SK-MEL-5 (cell line): ENCODE measurements at regions of chr16 and their contacts with region 1.

Region 1: DNA sequence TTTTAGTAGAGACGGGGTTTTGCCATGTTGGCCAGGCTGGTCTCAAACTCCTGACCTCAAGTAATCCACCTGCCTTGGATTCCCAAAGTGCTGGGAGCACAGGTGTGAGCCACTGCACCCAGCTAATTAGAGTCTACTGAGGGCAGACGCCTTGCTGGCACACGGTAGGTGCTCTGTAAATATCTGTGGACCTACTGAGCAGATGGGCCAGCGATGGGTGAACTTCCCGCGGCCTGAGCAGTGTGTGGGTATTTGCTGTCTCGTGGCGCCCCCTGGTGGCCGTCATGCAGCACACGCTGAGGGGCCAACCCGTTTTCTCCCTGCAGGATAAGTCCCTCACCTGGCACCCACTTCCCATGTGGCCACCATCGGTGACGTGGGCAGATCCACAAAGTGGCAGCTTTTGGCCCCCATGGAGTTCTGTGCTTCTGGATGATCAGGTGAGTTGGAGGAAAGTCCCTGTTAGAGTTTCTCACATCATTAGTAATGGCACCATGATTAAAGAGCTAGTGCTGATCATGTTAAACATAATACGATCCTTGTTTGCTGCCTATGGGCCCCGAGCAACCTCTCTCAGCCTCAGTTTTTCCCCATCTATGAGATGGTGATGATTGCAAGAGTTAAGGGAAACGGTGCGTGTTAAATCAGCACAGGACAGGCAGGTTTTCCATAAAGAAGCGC is 40.7 kb downstream of the ZDHHC7 start:
- DNase-seq: peak; percentile 66

Region 2: GRCh38 chr16:84754353-84754856 is 216.2 kb before region 1 on chr16:
- in situ Hi-C with region 1: loop called (anchors 10 kb)
- DNase-seq: peak; percentile 90

Region 3: DNA sequence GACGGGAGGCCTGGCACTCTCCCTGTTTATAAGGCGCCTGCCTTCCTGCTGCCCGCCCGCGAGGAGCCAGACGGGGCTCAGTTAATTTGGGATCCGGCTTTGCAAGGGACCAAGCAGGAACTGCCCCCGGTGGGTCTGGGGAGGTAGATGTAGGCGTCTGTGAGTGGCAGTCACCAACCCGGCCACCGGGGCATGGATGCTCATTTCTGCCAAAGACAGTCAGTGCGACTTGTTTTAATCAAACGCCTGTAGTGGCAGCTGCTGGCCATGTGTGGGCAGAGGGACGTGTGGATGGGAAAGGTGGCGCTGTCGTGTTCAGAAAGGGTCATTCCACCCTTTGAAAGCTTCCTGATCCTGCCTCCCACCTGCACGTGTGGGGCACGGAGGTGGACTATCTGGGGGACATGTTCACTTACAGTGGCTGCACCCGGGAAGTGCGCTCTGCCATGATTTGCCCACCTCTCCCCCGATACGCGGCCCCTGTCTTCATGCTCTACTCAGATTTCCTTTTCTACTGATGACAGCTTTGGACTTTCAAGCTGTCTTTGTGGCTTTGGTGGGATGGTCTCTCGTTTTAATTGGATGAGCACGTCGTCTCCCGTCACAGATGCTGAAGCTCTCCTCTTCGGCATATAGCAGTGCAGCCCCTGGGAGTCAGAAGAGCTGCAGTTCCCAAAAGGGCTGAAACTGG is 202.0 kb after region 1 on chr16:
- in situ Hi-C with region 1: no loop called
- DNase-seq: peak; percentile 22